ENCODE measurements at regions of chr6 and their contacts with region 1.

Region 1: GRCh38 chr6:106997390-106998158 is 23.0 kb upstream of the CD24 start:
- DNase-seq: peak; percentile 77
- H3K4me3 ChIP-seq: no peak overlapping the region
- H3K27ac ChIP-seq: no peak overlapping the region
- H3K4me1 ChIP-seq: no peaks in the 10 kb centered on the region
- H3K27me3 ChIP-seq: no peaks in the 10 kb centered on the region
- CTCF ChIP-seq: peak; percentile 97

Region 2: GRCh38 chr6:106064756-106065155 is 932.8 kb before region 1 on chr6:
- CTCF ChIA-PET with region 1: interaction called, 11 read pairs
- POLR2A ChIA-PET with region 1: no interaction called
- intact Hi-C with region 1: no loop called
- DNase-seq: no peak
- H3K4me3 ChIP-seq: no peak overlapping the region
- H3K27ac ChIP-seq: no peak overlapping the region
- H3K4me1 ChIP-seq: no peaks in the 10 kb centered on the region
- H3K27me3 ChIP-seq: no peaks in the 10 kb centered on the region
- CTCF ChIP-seq: no peak

Region 3: GRCh38 chr6:106444777-106445507 is 552.6 kb before region 1 on chr6:
- CTCF ChIA-PET with region 1: no interaction called
- POLR2A ChIA-PET with region 1: no interaction called
- intact Hi-C with region 1: loop called (anchors 1 kb)
- DNase-seq: peak; percentile 72
- H3K4me3 ChIP-seq: no peak overlapping the region
- H3K27ac ChIP-seq: no peak overlapping the region
- H3K4me1 ChIP-seq: peaks cover 4% of the 10 kb centered on the region
- H3K27me3 ChIP-seq: peaks cover 12% of the 10 kb centered on the region
- CTCF ChIP-seq: peak; percentile 79

Region 4: GRCh38 chr6:106883808-106884262 is 113.7 kb before region 1 on chr6:
- CTCF ChIA-PET with region 1: no interaction called
- POLR2A ChIA-PET with region 1: no interaction called
- intact Hi-C with region 1: no loop called
- DNase-seq: peak; percentile 18
- H3K4me3 ChIP-seq: no peak overlapping the region
- H3K27ac ChIP-seq: no peak overlapping the region
- H3K4me1 ChIP-seq: no peaks in the 10 kb centered on the region
- H3K27me3 ChIP-seq: no peaks in the 10 kb centered on the region
- CTCF ChIP-seq: peak; percentile 43